AG04450 (cell line): ENCODE measurements at regions of chr7 and their contacts with region 1.

Region 1: DNA sequence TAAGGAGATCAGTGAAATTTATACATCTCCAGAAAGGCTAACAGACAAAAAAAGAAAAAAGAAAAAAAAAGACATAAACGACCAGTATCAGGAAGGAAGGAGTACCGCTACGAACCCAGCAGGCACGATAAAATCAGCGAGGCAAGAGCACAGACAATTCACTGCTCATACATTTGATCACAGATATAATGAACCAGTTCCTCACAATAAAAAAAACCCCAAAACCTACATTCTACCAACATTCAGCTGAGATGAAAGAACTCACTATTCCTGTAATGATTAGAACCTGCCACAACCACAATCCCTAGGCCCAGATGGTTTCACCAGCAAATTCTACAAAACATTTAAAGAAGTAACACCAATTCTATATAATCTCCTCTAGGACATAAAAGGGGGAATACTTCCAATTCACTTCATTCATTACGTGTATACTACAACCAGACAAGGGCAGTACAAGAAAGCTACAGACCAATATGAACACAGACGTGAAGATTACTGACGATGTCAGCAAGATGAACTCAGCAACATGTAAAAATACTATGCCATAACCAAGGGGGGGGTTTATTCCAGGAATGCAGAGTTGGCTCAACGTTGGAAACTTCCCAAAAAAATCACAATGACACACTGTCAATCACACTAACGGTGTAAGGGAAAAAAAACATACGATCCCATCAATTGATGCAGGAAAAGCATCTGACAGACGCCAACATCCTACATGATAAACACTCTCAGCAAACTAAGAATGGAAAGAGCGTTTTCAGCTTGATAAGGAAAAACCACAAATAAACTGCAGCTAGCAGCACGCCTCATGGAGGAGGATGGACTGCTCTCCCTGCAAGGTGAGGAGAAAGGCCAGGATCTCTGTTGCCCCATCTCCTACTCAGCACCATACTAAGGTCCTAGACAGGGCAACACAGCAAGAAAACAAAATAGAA is 256.2 kb downstream of the ELFN1 start:
- DNase-seq: no peak
- H3K4me3 ChIP-seq: no peak overlapping the region
- H3K27ac ChIP-seq: no peak overlapping the region
- H3K27me3 ChIP-seq: no peaks in the 10 kb centered on the region
- CTCF ChIP-seq: no peak

Region 2: GRCh38 chr7:1912593-1913465 is 13.4 kb before region 1 on chr7:
- CTCF ChIA-PET with region 1: interaction called, 11 read pairs
- POLR2A ChIA-PET with region 1: no interaction called
- DNase-seq: peak; percentile 75
- H3K4me3 ChIP-seq: peak overlapping the region; percentile 20
- H3K27ac ChIP-seq: peak overlapping the region; percentile 78
- H3K27me3 ChIP-seq: no peaks in the 10 kb centered on the region
- CTCF ChIP-seq: peak; percentile 60

Region 3: GRCh38 chr7:2082139-2082998 is 156.1 kb after region 1 on chr7:
- CTCF ChIA-PET with region 1: no interaction called
- POLR2A ChIA-PET with region 1: no interaction called
- DNase-seq: peak; percentile 59
- H3K4me3 ChIP-seq: no peak overlapping the region
- H3K27ac ChIP-seq: peak overlapping the region; percentile 73
- H3K27me3 ChIP-seq: no peaks in the 10 kb centered on the region
- CTCF ChIP-seq: no peak